ENCODE measurements at regions of chr5 and their contacts with region 1.

Region 1: DNA sequence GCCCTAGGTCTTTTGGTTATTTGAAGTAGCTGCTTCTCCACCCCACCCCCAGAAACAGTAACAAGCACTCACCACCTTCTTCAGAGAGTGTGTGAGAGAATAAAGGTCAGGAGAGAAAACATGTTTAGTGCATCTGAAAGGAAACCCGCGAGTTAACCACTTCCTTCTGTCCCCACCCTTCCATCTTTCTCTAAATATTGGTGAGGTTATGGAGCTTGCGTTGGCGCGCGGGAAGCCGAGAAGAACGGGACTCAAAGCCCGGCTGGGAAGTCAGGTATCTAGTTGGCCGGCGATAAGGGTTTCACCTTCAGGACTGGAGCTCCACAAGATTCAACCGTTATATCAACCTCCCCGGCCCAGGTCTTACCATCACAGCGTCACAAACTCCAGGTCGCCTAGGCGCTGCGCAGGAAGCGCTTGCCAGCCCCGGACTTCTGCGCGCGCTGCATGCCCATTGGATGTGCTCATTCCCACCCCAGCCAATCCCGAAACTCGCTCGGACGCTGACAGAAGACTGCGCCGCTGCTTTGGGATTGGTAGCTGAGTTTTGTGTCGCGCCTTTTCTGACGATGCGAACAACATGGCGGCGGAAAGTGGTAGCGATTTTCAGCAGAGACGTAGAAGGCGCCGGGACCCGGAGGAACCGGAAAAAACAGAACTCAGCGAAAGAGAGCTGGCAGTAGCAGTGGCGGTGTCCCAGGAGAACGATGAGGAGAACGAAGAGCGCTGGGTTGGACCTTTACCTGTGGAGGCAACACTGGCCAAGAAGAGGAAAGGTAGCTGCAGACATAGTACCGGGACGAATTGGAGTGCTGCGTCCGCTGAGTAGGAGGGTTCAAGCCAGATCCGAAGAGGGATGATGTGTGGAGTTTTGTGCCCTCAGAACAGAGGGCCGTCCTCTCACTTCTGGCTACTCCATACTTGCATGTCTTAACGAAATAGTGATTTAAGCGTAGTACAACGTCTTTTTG is at the starts of genes CENPK and PPWD1:
- DNase-seq: peak; percentile 85 to 97 (median 94)
- ATAC-seq: peak; percentile 97
- H3K4me3 Mint-ChIP-seq: peak within 1 kb of the TSS; percentile 88 to 100 (median 98)
- H3K27ac Mint-ChIP-seq: peak within 1 kb of the TSS; percentile 97 to 100 (median 99)
- H3K4me1 Mint-ChIP-seq: peaks cover 21 to 62% (median 53%) of the 10 kb centered on the region in 4 donors
- H3K27me3 Mint-ChIP-seq: no peaks in the 10 kb centered on the region
- polyA plus RNA-seq, gene CENPK: 28.6 to 39.8 (median 32.7) TPM
- polyA plus RNA-seq, gene PPWD1: 26.8 to 39.5 (median 37.5) TPM

Region 2: GRCh38 chr5:65102828-65103711 is 459.9 kb before region 1 on chr5:
- POLR2A ChIA-PET with region 1: interaction called, 19 read pairs
- DNase-seq: peak; percentile 39 to 79 (median 62)
- ATAC-seq: peak; percentile 76 to 80
- H3K4me3 Mint-ChIP-seq: peak overlapping the region; percentile 82 to 93 (median 89)
- H3K27ac Mint-ChIP-seq: peak overlapping the region; percentile 95 to 99 (median 97)
- H3K4me1 Mint-ChIP-seq: peaks cover 32 to 56% (median 46%) of the 10 kb centered on the region in 4 donors
- H3K27me3 Mint-ChIP-seq: no peaks in the 10 kb centered on the region

Region 3: DNA sequence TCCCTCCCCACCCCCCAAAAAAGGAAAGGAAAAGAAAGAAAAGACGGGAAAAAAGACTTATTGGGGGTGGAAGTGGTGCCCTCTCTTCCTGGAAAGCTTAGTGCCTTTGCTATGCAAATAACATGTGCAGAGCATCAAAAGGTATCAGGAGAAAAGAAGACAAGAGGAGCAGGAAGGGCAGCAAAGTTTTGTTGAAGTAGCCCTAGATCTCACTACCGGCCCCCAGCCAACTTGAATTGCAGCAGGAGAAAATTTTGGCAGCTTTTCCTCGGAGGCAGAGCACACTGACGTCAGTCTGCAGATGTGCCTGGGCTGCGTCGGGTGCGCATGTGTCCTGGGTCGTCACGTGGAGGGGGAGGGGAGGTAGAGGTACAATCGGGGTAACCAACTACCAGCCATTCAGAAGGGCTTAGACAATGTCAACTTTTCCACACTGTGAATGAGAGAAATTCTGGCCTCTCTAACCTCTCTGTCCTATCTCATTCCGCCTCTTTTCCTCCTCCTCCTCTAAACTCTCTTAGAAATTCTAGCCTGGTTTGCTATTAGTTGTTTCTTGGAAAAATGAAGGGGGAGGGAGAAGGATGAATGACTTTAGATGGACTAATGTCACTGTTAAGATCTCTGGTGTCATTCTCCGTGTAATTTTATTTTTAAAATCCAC is 81.3 kb before region 1 on chr5 and contains the start of gene ADAMTS6:
- POLR2A ChIA-PET with region 1: interaction called, 14 read pairs
- DNase-seq: peak; percentile 62 to 92 (median 77)
- ATAC-seq: peak; percentile 88 to 90
- H3K4me3 Mint-ChIP-seq: no peak within 1 kb of the TSS
- H3K27ac Mint-ChIP-seq: peak within 1 kb of the TSS; percentile 90 to 99 (median 94)
- H3K4me1 Mint-ChIP-seq: peaks cover 6 to 21% (median 9%) of the 10 kb centered on the region in 4 donors
- H3K27me3 Mint-ChIP-seq: peaks cover 0 to 2% (median 0%) of the 10 kb centered on the region in 5 donors
- polyA plus RNA-seq, gene ADAMTS6: 0.25 to 0.66 (median 0.51) TPM

Region 4: DNA sequence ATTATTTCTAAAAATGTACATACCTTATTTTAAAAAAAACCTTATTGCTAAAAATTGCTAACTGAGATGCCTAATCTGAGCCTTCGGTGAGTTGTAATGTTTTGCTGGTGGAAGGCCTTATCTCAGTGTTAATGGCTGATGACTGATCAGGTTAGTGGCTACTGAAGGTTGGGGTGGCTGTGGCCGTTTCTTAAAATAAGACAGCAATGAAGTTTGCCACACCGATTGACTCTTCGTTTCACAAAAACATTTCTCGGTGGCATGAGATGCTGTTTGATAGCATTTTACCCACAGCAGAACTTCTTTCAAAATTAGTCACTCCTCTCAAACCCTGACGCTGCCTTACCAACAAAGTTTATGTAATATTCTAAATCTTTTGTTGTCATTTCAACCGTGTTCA is 14.7 kb before region 1 on chr5:
- POLR2A ChIA-PET with region 1: interaction called, 20 read pairs
- DNase-seq: no peak
- ATAC-seq: no peak
- H3K4me3 Mint-ChIP-seq: no peak overlapping the region
- H3K27ac Mint-ChIP-seq: no peak overlapping the region
- H3K4me1 Mint-ChIP-seq: peaks cover 0 to 2% (median 0%) of the 10 kb centered on the region in 4 donors
- H3K27me3 Mint-ChIP-seq: no peaks in the 10 kb centered on the region

Region 5: GRCh38 chr5:65624571-65625555 is 61.8 kb after region 1 on chr5 and contains the starts of genes SHLD3 and TRAPPC13:
- POLR2A ChIA-PET with region 1: interaction called, 64 read pairs
- DNase-seq: peak; percentile 64 to 96 (median 88)
- ATAC-seq: peak; percentile 71 to 73
- H3K4me3 Mint-ChIP-seq: peak within 1 kb of the TSS; percentile 93 to 100 (median 99)
- H3K27ac Mint-ChIP-seq: peak within 1 kb of the TSS; percentile 95 to 100 (median 99)
- H3K4me1 Mint-ChIP-seq: peaks cover 9 to 61% (median 47%) of the 10 kb centered on the region in 4 donors
- H3K27me3 Mint-ChIP-seq: no peaks in the 10 kb centered on the region
- polyA plus RNA-seq, gene SHLD3: 2.6 to 7.2 (median 2.9) TPM
- polyA plus RNA-seq, gene TRAPPC13: 17.3 to 19.7 (median 18.1) TPM

Region 6: GRCh38 chr5:65721720-65722574 is 158.9 kb after region 1 on chr5 and contains the starts of genes NLN and SGTB:
- POLR2A ChIA-PET with region 1: interaction called, 20 read pairs
- DNase-seq: peak; percentile 67 to 92 (median 84)
- ATAC-seq: peak; percentile 82 to 89
- H3K4me3 Mint-ChIP-seq: peak within 1 kb of the TSS in 9 of 10 donors; percentile 88 to 97 (median 93)
- H3K27ac Mint-ChIP-seq: peak within 1 kb of the TSS; percentile 74 to 96 (median 88)
- H3K4me1 Mint-ChIP-seq: peaks cover 10 to 29% (median 14%) of the 10 kb centered on the region in 4 donors
- H3K27me3 Mint-ChIP-seq: no peaks in the 10 kb centered on the region
- polyA plus RNA-seq, gene NLN: 2.3 to 4.9 (median 3.7) TPM
- polyA plus RNA-seq, gene SGTB: 12.5 to 15.4 (median 15.0) TPM